ENCODE measurements at regions of chr11 and their contacts with region 1.

Region 1: GRCh38 chr11:9384535-9385303 is at the start of gene IPO7:
- DNase-seq: peak; percentile 90
- ATAC-seq: peak; percentile 94
- H3K4me3 Mint-ChIP-seq: peak within 1 kb of the TSS; percentile 91
- H3K27ac Mint-ChIP-seq: peak within 1 kb of the TSS; percentile 91
- H3K4me1 Mint-ChIP-seq: peaks cover 38% of the 10 kb centered on the region
- H3K27me3 Mint-ChIP-seq: no peaks in the 10 kb centered on the region
- CTCF ChIP-seq: no peak
- total RNA-seq, gene IPO7: 212 to 226 TPM (median 215 TPM) in 3 replicates

Region 2: DNA sequence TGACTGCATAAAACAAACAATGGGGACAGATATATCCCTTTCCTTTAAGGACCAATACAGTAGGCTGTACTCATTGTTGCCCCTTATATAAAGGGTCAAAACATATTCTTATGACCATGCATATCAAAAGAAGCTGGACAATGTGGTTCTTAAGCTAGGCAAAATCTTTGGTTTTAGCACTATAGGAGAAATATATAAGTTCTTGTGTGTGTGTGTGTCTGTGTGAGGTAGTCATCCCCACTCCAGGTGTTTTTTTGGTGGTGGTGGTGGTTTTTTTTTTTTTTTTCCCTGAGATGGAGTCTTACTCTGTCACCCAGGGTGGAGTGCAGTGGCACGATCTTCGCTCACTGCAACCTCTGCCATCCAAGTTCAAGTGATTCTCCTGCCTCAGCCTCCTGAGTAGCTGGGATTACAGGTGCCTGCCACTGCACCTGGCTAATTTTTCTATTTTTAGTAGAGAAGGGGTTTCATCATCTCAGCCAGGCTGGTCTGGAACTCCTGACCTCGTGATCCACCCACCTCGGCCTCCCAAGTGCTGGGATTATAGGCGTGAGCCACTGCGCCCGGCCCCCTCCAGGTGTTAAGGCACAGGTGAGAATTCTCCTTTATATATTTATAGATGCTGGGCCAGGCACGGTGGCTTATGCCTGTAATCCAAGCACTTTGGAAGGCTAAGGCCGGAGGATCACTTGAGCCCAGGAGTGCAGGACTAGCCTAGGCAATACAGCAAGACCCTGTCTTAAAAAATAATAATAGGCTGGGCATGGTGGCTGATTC is 64.0 kb after region 1 on chr11:
- CTCF ChIA-PET with region 1: no interaction called
- POLR2A ChIA-PET with region 1: no interaction called
- DNase-seq: no peak
- ATAC-seq: no peak; the same call in 1 of the 2 replicates
- H3K4me3 Mint-ChIP-seq: no peak overlapping the region
- H3K27ac Mint-ChIP-seq: peak overlapping the region; percentile 60
- H3K4me1 Mint-ChIP-seq: no peaks in the 10 kb centered on the region
- H3K27me3 Mint-ChIP-seq: no peaks in the 10 kb centered on the region
- CTCF ChIP-seq: no peak

Region 3: DNA sequence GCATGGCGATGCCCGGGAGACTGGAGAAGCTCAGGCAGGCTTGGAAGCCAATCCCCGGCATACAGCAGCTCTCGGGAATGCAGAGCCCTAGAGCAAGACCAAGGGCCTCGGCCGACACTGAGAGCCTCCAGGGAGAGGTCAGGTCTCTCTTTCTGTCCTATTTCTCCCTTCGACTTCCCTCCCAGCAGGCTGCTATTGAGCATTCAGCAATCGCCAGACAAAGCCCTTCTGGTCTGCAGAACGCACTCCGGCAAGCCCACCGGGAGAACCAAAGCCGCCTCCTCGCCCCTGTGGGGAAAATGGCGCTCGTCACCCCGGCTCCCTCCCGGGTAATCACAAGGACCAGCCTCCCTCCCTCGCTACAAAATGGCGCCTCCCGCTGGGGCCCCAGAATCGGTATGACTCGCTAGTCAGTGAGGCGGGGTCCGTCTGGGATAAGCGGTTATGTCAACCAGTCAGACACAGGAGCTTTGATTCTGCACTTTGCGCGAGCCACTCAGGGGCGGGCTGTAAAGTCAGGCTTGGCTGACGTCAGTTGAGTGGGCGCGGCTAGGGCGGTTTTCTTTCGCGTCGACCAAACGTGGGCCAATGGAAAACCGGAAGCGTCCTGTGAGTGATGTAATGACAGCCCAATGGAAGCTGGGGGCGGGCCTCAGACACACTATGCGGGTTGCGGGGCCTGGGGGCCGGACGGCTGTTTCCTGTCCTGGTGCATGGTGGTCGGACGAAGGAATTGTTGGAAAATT is 75.8 kb after region 1 on chr11 and contains the start of gene ZNF143:
- CTCF ChIA-PET with region 1: interaction called, 3 read pairs
- POLR2A ChIA-PET with region 1: interaction called, 13 read pairs
- DNase-seq: peak; percentile 100
- ATAC-seq: peak; percentile 96
- H3K4me3 Mint-ChIP-seq: peak within 1 kb of the TSS; percentile 98
- H3K27ac Mint-ChIP-seq: peak within 1 kb of the TSS; percentile 99
- H3K4me1 Mint-ChIP-seq: peaks cover 18% of the 10 kb centered on the region
- H3K27me3 Mint-ChIP-seq: no peaks in the 10 kb centered on the region
- CTCF ChIP-seq: no peak
- total RNA-seq, gene ZNF143: 34.0 to 35.8 TPM (median 34.0 TPM) in 3 replicates

Region 4: DNA sequence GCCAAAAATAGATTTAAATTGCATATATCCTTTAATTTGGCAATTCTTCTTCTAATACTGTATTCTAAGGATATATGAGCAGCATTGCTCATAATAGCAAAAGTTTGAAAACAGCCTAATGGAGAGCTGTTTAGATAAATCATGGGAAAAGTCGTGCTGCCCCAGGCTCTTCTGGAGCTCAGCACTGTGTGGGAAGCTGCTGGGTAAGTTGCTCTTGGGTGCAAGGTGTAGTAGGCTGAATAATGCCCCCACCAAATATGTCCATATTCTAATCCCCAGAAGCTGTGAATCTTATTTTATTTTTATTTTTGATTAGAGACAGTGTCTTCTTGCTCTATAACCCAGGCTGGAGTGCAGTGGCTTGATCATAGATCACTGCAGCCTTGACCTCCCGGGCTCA is 153.8 kb after region 1 on chr11:
- CTCF ChIA-PET with region 1: no interaction called
- POLR2A ChIA-PET with region 1: no interaction called
- DNase-seq: no peak
- ATAC-seq: no peak
- H3K4me3 Mint-ChIP-seq: no peak overlapping the region
- H3K27ac Mint-ChIP-seq: no peak overlapping the region
- H3K4me1 Mint-ChIP-seq: peaks cover 15% of the 10 kb centered on the region
- H3K27me3 Mint-ChIP-seq: no peaks in the 10 kb centered on the region
- CTCF ChIP-seq: no peak